ENCODE measurements at regions of chr1 and their contacts with region 1.

Region 1: GRCh38 chr1:65235867-65236805 is 73.2 kb upstream of the DNAJC6 start:
- DNase-seq: no peak
- ATAC-seq: peak in 1 of 2 donors; percentile 35
- H3K4me3 ChIP-seq: no peak overlapping the region
- H3K27ac ChIP-seq: no peak overlapping the region
- H3K4me1 ChIP-seq: no peaks in the 10 kb centered on the region
- H3K27me3 ChIP-seq: no peaks in the 10 kb centered on the region
- CTCF ChIP-seq: peak; percentile 56

Region 2: DNA sequence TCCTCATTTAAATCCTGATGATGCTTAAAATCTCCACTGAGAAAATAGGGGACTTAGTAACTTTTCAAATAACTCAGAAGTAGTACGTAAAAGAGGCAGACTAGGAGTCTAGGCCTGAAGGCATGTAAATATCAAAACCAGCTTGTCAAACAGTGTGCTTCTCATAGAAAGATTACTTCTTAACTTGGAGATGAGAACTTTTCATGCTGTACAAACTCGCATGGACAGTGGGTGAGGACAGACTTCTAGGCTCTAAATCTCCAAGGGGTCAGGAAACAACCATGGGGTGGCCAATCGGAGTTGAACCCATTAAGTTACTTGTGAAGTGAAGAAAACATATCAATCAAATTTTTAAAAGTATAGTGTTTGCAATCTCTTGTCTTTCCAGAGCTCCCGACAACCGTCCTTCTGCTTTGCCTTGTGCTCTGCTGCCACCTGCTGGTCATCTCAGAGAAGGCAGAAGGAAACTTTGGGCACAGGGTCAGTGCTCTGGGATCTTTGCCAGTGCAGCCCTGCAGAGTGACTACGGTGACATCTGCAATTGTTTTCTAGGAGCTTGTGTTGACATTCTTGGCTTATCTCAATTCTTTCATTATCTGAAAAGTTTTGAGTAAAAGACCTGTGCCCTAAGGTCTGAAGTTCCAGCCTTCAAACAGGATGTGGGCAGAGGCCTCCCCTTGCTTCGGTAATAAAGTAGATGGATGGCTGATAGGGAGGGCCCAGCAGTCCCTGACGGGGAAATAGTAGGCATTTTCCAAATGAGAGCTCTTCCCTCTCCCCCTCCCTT is 451.5 kb after region 1 on chr1:
- intact Hi-C with region 1: loop called (anchors 10 kb)
- DNase-seq: peak; percentile 81
- ATAC-seq: peak; percentile 92 to 93
- H3K4me3 ChIP-seq: no peak overlapping the region
- H3K27ac ChIP-seq: no peak overlapping the region
- H3K4me1 ChIP-seq: peaks cover 20% of the 10 kb centered on the region
- H3K27me3 ChIP-seq: no peaks in the 10 kb centered on the region
- CTCF ChIP-seq: peak; percentile 96